ENCODE measurements at regions of chr1 and their contacts with region 1.

Region 1: GRCh38 chr1:33758698-33759097 is 105.2 kb upstream of the HMGB4 start:
- DNase-seq: no peak
- ATAC-seq: peak; percentile 75
- H3K4me3 ChIP-seq: no peak overlapping the region
- H3K27ac ChIP-seq: no peak overlapping the region
- H3K4me1 ChIP-seq: peaks cover 11 to 13% of the 10 kb centered on the region in 2 donors
- H3K27me3 ChIP-seq: no peaks in the 10 kb centered on the region

Region 2: DNA sequence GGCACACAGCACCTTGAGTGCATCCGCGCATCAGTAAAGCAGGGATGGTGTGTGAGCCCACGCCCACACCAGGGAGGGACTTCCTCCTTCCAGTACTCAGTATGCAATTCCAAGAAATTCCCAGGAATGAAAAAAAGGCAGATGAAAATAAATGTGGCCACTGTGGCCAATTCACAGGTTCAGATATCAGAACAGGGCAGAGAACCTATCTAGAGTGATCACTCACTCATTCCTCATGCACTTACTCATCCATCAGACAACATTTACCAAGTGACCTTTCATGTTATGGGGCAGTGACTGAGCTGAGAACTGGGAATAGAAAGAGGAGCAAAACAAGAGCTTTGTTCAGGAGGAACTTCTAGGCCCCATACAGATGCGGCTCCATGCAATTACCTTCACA is 172.6 kb before region 1 on chr1:
- intact Hi-C with region 1: no loop called
- DNase-seq: no peak
- ATAC-seq: no peak
- H3K4me3 ChIP-seq: no peak overlapping the region
- H3K27ac ChIP-seq: no peak overlapping the region
- H3K4me1 ChIP-seq: peaks cover 0 to 5% of the 10 kb centered on the region in 2 donors
- H3K27me3 ChIP-seq: no peaks in the 10 kb centered on the region

Region 3: GRCh38 chr1:33876970-33877650 is 118.4 kb after region 1 on chr1:
- intact Hi-C with region 1: loop called (anchors 5 to 10 kb)
- DNase-seq: peak; percentile 83 to 90
- ATAC-seq: no peak
- H3K4me3 ChIP-seq: no peak overlapping the region
- H3K27ac ChIP-seq: no peak overlapping the region
- H3K4me1 ChIP-seq: peaks cover 0 to 11% of the 10 kb centered on the region in 2 donors
- H3K27me3 ChIP-seq: no peaks in the 10 kb centered on the region

Region 4: GRCh38 chr1:33886496-33886895 is 127.8 kb after region 1 on chr1:
- intact Hi-C with region 1: loop called in 1 of 2 experiments (anchors 10 kb)
- DNase-seq: no peak
- ATAC-seq: no peak
- H3K4me3 ChIP-seq: no peak overlapping the region
- H3K27ac ChIP-seq: no peak overlapping the region
- H3K4me1 ChIP-seq: no peaks in the 10 kb centered on the region
- H3K27me3 ChIP-seq: no peaks in the 10 kb centered on the region

Region 5: DNA sequence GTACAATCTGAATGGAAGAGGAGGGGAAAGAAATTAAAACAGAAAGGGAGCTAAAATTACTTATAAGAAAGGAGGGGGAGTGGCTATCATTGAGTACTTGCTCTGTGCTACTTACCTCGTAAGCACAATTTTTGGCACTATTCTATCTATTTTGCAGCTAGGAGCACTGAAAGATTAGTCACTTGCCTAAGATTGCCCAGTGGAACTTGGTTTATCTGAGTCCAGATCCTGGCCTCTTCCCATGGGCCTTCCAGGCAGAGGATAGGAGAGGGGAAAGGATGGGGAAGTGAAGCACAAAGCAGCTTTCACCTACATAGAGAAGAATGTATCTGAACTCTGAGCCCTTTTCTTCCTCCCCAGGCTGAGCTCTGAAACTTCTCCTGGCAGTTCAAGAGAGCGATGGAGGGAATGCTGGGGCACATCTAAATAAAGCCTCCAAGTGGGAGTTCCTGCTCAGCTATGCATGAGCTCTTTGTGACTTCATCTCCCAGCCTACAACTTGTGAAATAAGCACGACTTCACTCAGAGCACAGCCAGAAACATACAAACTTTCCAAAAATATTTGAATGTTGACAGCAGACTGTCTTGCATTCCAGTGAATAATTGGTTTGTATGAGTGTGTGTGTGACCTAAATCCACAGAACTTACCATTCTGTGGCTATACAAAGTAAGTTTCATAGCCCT is 134.6 kb after region 1 on chr1:
- intact Hi-C with region 1: loop called (anchors 5 to 10 kb)
- DNase-seq: no peak
- ATAC-seq: peak; percentile 92
- H3K4me3 ChIP-seq: no peak overlapping the region
- H3K27ac ChIP-seq: peak overlapping the region; percentile 97 to 98
- H3K4me1 ChIP-seq: peaks cover 0 to 5% of the 10 kb centered on the region in 2 donors
- H3K27me3 ChIP-seq: no peaks in the 10 kb centered on the region

Region 6: GRCh38 chr1:33986390-33987095 is 227.8 kb after region 1 on chr1:
- intact Hi-C with region 1: loop called (anchors 5 to 10 kb)
- DNase-seq: peak; percentile 89
- ATAC-seq: peak; percentile 93
- H3K4me3 ChIP-seq: no peak overlapping the region
- H3K27ac ChIP-seq: peak overlapping the region in 1 of 2 donors; percentile 97
- H3K4me1 ChIP-seq: peaks cover 0 to 3% of the 10 kb centered on the region in 2 donors
- H3K27me3 ChIP-seq: no peaks in the 10 kb centered on the region

Measured in aorta (tissue), 5 donors.